ENCODE measurements at regions of chr3 and their contacts with region 1.

Region 1: DNA sequence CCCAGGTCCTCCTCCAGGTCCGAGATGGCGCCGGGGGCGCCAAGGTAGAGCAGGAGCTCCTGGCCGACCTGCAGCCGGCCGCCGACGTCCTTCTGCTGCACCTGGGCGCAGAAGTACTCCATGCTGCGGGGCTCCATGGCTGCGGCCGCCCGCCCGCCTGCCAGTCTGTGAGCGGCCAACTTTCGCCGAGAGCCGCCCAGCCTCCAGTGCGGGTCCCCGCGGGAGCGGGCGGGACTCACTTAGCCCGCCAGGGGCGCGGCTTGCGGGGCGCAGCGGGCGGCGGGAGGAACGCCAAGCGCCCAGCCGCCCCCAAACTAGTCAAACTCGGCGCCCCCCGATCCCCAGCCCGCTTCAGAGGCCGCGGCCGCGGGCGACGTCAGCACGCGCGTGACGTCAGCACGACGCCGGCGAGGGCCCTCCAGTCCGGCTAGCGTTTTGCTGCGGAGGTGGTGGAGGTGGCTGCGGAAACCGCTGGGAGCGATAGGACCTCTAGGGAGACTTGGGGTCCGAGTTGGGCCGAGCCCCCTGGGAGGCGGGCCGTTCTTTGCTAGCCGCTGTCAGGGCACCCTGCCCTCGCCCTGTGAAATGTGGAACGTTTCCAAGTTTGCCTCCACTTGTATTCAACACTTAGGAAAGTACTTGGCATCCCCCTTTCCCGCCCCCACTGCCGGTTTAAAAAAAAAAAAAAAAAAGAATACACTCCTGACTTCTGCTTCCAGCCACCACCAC is at the start of gene CLASP2:
- DNase-seq: peak; percentile 91
- H3K4me3 ChIP-seq: peak within 1 kb of the TSS; percentile 67 to 94 (median 76)
- H3K27ac ChIP-seq: peak within 1 kb of the TSS; percentile 76
- H3K4me1 ChIP-seq: peaks cover 18% of the 10 kb centered on the region
- H3K27me3 ChIP-seq: no peaks in the 10 kb centered on the region
- CTCF ChIP-seq: no peak
- POLR2A ChIP-seq: peak; percentile 88
- total RNA-seq, gene CLASP2: 55.0 and 62.9 TPM in 2 replicates

Region 2: GRCh38 chr3:32947789-32948238 is 770.2 kb before region 1 on chr3:
- CTCF ChIA-PET with region 1: no interaction called
- POLR2A ChIA-PET with region 1: no interaction called
- dilution Hi-C with region 1: no loop called
- intact Hi-C with region 1: loop called (anchors 5 kb)
- DNase-seq: peak; percentile 85
- H3K4me3 ChIP-seq: no peak overlapping the region
- H3K27ac ChIP-seq: no peak overlapping the region
- H3K4me1 ChIP-seq: peaks cover 5% of the 10 kb centered on the region
- H3K27me3 ChIP-seq: no peaks in the 10 kb centered on the region
- CTCF ChIP-seq: peak; percentile 73 to 84
- POLR2A ChIP-seq: no peak

Region 3: DNA sequence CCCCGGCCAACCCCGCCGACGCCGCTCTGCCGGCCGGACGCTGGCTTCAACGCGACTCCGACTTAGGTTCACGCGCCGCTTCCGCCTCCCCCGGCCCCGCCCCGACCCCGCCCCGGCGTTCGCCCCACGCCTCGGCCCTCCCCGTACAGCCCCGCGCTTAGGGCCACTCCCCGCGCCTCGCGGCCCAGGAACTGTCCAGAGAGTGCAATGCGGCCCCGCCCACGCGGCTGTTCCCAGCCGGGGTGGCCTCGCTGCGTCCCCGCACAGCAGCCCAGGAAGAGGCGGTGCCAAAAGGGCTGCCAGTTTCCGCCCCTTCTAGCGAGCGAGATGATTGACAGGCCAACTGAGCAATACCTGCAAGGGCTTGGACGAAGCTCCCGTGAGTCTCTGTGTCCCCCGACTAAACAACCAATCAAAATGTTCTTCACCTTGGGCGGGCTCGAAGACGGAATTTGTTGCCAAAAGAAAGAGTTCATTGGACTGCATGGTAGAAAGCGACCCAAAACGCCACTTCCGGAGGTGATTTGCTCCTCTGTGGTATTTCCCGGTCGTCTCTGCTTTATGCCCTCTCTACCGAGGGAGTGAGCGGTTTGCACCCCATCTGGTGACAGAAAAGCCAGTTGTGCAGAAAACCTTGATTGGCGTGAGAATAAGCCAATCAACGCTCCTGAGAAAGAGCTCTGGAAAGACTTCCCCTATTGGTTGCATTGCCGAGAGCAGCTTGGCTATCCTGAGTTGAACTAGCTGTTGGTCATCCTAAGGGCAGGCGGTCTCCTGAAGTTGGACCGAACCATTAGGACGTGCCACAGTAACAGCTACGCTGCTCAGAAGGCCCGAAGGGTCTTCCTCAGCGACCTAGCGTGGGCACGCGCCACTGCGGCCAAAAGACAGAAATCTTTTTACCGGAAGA is 277.5 kb before region 1 on chr3 and contains the start of gene UBP1:
- CTCF ChIA-PET with region 1: no interaction called
- POLR2A ChIA-PET with region 1: no interaction called
- dilution Hi-C with region 1: no loop called
- intact Hi-C with region 1: loop called (anchors 1 kb)
- DNase-seq: peak; percentile 99
- H3K4me3 ChIP-seq: peak within 1 kb of the TSS; percentile 98 to 99 (median 98)
- H3K27ac ChIP-seq: peak within 1 kb of the TSS; percentile 86
- H3K4me1 ChIP-seq: peaks cover 23% of the 10 kb centered on the region
- H3K27me3 ChIP-seq: no peaks in the 10 kb centered on the region
- CTCF ChIP-seq: peak in 1 of 2 donors; percentile 16
- POLR2A ChIP-seq: peak; percentile 95
- total RNA-seq, gene UBP1: 89.7 and 90.5 TPM in 2 replicates

Region 4: GRCh38 chr3:33636125-33636850 is 81.7 kb before region 1 on chr3:
- CTCF ChIA-PET with region 1: interaction called, 14 read pairs
- POLR2A ChIA-PET with region 1: no interaction called
- dilution Hi-C with region 1: no loop called
- intact Hi-C with region 1: loop called (anchors 1 kb)
- DNase-seq: peak; percentile 70
- H3K4me3 ChIP-seq: no peak overlapping the region
- H3K27ac ChIP-seq: no peak overlapping the region
- H3K4me1 ChIP-seq: no peaks in the 10 kb centered on the region
- H3K27me3 ChIP-seq: no peaks in the 10 kb centered on the region
- CTCF ChIP-seq: peak; percentile 33 to 42
- POLR2A ChIP-seq: no peak

Region 5: DNA sequence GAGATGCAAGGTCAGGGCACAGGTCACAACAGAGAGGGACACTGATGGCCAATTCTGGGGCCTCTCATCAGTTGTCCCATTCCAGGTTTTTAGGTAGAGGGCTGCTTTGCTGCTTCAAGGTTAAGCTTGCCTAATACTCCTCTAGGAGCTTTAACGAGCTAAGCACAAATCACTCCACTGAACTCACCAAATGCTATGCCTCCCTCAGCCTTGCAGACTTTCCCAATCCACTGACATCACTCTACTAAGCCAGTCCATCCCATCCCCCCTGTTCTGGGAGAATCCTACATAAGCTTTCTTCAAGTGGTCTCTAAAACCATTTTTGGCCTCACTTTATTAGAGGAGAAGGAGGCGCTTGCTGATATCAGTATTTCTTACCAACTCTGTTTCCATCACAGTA is 55.6 kb after region 1 on chr3:
- CTCF ChIA-PET with region 1: interaction called, 6 read pairs
- POLR2A ChIA-PET with region 1: no interaction called
- dilution Hi-C with region 1: no loop called
- intact Hi-C with region 1: loop called (anchors 2 kb)
- DNase-seq: no peak
- H3K4me3 ChIP-seq: no peak overlapping the region
- H3K27ac ChIP-seq: no peak overlapping the region
- H3K4me1 ChIP-seq: no peaks in the 10 kb centered on the region
- H3K27me3 ChIP-seq: no peaks in the 10 kb centered on the region
- CTCF ChIP-seq: no peak
- POLR2A ChIP-seq: no peak